ENCODE measurements at regions of chr13 and their contacts with region 1.

Region 1: GRCh38 chr13:41132512-41133152 is at the start of gene KBTBD6:
- DNase-seq: peak; percentile 92 to 96 (median 94)
- H3K4me3 ChIP-seq: peak within 1 kb of the TSS; percentile 60 to 82 (median 65)
- H3K4me3 Mint-ChIP-seq: peak within 1 kb of the TSS; percentile 97 to 99
- H3K27ac ChIP-seq: peak within 1 kb of the TSS; percentile 51 to 87
- H3K27ac Mint-ChIP-seq: peak within 1 kb of the TSS; percentile 84 to 91 (median 89)
- H3K4me1 ChIP-seq: peaks cover 12 to 28% of the 10 kb centered on the region in 2 donors
- H3K4me1 Mint-ChIP-seq: peaks cover 37% of the 10 kb centered on the region
- H3K27me3 ChIP-seq: no peaks in the 10 kb centered on the region
- H3K27me3 Mint-ChIP-seq: no peaks in the 10 kb centered on the region
- CTCF ChIP-seq: no peak
- polyA plus RNA-seq, gene KBTBD6: 0.37 to 1.2 (median 0.54) TPM

Region 2: GRCh38 chr13:40940841-40941240 is 191.8 kb before region 1 on chr13:
- intact Hi-C with region 1: no loop called
- DNase-seq: no peak
- H3K4me3 ChIP-seq: no peak overlapping the region
- H3K4me3 Mint-ChIP-seq: no peak overlapping the region
- H3K27ac ChIP-seq: no peak overlapping the region
- H3K27ac Mint-ChIP-seq: peak overlapping the region in 4 of 7 donors; percentile 6 to 75 (median 27)
- H3K4me1 ChIP-seq: no peaks in the 10 kb centered on the region
- H3K4me1 Mint-ChIP-seq: peaks cover 2% of the 10 kb centered on the region
- H3K27me3 ChIP-seq: no peaks in the 10 kb centered on the region
- H3K27me3 Mint-ChIP-seq: no peaks in the 10 kb centered on the region
- CTCF ChIP-seq: no peak

Region 3: DNA sequence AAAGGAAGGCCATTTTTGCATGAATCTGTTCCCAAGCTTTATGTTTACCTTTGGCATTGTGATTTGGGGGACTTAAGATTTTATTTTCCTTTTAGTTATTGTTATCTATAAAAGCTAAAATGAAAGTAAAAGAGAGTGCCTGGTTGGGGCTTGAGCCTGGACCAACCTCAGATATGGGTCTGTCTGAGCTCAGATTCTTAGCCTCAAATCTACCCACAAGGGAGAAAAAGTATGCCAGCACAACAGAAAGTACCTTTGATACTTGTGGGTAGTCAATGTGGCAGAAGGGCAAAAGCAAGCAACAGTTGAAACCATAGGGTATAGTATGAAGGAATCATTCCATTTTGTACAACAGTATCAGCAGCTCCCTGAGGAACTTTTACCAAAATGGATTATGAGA is 26.5 kb after region 1 on chr13:
- intact Hi-C with region 1: no loop called
- DNase-seq: no peak
- H3K4me3 ChIP-seq: no peak overlapping the region
- H3K4me3 Mint-ChIP-seq: no peak overlapping the region
- H3K27ac ChIP-seq: no peak overlapping the region
- H3K27ac Mint-ChIP-seq: no peak overlapping the region
- H3K4me1 ChIP-seq: no peaks in the 10 kb centered on the region
- H3K4me1 Mint-ChIP-seq: no peaks in the 10 kb centered on the region
- H3K27me3 ChIP-seq: no peaks in the 10 kb centered on the region
- H3K27me3 Mint-ChIP-seq: peaks cover 0 to 2% (median 0%) of the 10 kb centered on the region in 3 donors
- CTCF ChIP-seq: no peak

Region 4: DNA sequence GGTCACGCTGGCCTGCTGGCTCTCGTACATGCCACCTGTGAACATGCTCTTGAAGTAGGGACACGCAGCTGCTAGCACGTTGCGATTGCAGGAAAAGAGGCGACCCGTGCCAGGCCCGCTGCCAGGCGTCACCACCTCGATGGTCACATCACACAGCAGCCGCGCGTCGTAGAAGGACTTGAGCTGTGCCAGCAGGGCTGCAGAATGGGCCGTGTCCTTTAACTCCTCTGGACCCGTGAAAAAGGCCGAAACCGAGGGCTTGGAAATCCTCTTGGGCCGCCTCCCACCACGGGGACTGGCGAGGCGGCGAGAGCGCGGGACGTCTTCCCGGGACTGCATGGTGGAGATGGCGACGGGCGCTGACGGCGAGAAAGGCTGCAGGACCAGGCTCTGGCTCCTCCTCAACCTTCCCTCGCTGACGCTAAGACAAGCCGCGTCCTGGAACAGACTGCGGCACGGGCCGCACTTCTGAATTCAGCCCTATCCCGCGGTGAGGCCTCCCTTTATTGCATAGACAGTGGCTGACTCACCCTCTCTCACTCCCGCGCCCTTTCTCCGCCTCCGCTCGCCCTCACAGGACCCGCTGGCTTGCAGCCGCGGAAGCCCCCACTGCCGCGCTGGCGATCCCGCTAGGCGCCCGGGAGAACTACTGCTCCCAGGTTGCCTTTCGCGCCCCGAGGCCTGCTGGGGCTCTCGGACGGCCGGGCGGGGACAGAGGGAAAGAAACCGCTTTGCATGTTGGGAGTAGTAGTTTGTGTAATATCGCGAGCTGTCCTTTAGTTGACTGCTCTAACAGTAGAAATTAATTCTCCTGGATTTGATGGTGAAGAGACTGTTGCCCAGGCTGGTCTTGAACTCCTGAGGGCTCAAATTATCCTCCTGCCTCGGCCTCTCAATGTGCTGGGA is 61.5 kb after region 1 on chr13 and contains the start of gene KBTBD7:
- intact Hi-C with region 1: loop called (anchors 2 to 5 kb)
- DNase-seq: peak; percentile 86 to 89 (median 87)
- H3K4me3 ChIP-seq: peak within 1 kb of the TSS; percentile 59 to 94 (median 80)
- H3K4me3 Mint-ChIP-seq: peak within 1 kb of the TSS; percentile 90 to 96
- H3K27ac ChIP-seq: peak within 1 kb of the TSS; percentile 90 to 93
- H3K27ac Mint-ChIP-seq: peak within 1 kb of the TSS; percentile 93 to 97 (median 96)
- H3K4me1 ChIP-seq: peaks cover 11% of the 10 kb centered on the region in 2 donors
- H3K4me1 Mint-ChIP-seq: peaks cover 31% of the 10 kb centered on the region
- H3K27me3 ChIP-seq: no peaks in the 10 kb centered on the region
- H3K27me3 Mint-ChIP-seq: peaks cover 2% of the 10 kb centered on the region in 3 donors
- CTCF ChIP-seq: no peak
- polyA plus RNA-seq, gene KBTBD7: 0.43 to 7.7 (median 5.5) TPM

Measured in CD14-positive monocyte (primary cell).